CD8-positive, alpha-beta T cell (primary cell): ENCODE measurements at regions of chr17 and their contacts with region 1.

Region 1: GRCh38 chr17:35254107-35254802 is 11.4 kb downstream of the SLFN5 start:
- DNase-seq: peak in 1 of 9 experiments; percentile 28
- ATAC-seq: no peak
- H3K4me3 ChIP-seq: no peak overlapping the region
- H3K4me3 Mint-ChIP-seq: no peak overlapping the region
- H3K27ac ChIP-seq: no peak overlapping the region
- H3K27ac Mint-ChIP-seq: peak overlapping the region; percentile 91
- H3K4me1 ChIP-seq: peaks cover 66% of the 10 kb centered on the region
- H3K4me1 Mint-ChIP-seq: peaks cover 90% of the 10 kb centered on the region
- H3K27me3 ChIP-seq: no peaks in the 10 kb centered on the region
- H3K27me3 Mint-ChIP-seq: no peaks in the 10 kb centered on the region
- CTCF ChIP-seq: no peak

Region 2: GRCh38 chr17:35265566-35266141 is 11.4 kb after region 1 on chr17:
- CTCF ChIA-PET with region 1: interaction called, 11 read pairs
- POLR2A ChIA-PET with region 1: interaction called, 8 read pairs
- intact Hi-C with region 1: no loop called
- DNase-seq: no peak
- ATAC-seq: no peak
- H3K4me3 ChIP-seq: no peak overlapping the region
- H3K4me3 Mint-ChIP-seq: peak overlapping the region; percentile 13
- H3K27ac ChIP-seq: peak overlapping the region in 1 of 2 experiments; percentile 22
- H3K27ac Mint-ChIP-seq: peak overlapping the region; percentile 91
- H3K4me1 ChIP-seq: peaks cover 74% of the 10 kb centered on the region
- H3K4me1 Mint-ChIP-seq: peaks cover 74% of the 10 kb centered on the region
- H3K27me3 ChIP-seq: no peaks in the 10 kb centered on the region
- H3K27me3 Mint-ChIP-seq: no peaks in the 10 kb centered on the region
- CTCF ChIP-seq: no peak

Region 3: GRCh38 chr17:35273684-35274083 is 19.4 kb after region 1 on chr17:
- CTCF ChIA-PET with region 1: interaction called, 4 read pairs
- POLR2A ChIA-PET with region 1: interaction called, 11 read pairs
- intact Hi-C with region 1: no loop called
- DNase-seq: no peak
- ATAC-seq: no peak
- H3K4me3 ChIP-seq: no peak overlapping the region
- H3K4me3 Mint-ChIP-seq: no peak overlapping the region
- H3K27ac ChIP-seq: no peak overlapping the region
- H3K27ac Mint-ChIP-seq: peak overlapping the region; percentile 89
- H3K4me1 ChIP-seq: peaks cover 21% of the 10 kb centered on the region
- H3K4me1 Mint-ChIP-seq: peaks cover 70% of the 10 kb centered on the region
- H3K27me3 ChIP-seq: no peaks in the 10 kb centered on the region
- H3K27me3 Mint-ChIP-seq: no peaks in the 10 kb centered on the region
- CTCF ChIP-seq: no peak

Region 4: DNA sequence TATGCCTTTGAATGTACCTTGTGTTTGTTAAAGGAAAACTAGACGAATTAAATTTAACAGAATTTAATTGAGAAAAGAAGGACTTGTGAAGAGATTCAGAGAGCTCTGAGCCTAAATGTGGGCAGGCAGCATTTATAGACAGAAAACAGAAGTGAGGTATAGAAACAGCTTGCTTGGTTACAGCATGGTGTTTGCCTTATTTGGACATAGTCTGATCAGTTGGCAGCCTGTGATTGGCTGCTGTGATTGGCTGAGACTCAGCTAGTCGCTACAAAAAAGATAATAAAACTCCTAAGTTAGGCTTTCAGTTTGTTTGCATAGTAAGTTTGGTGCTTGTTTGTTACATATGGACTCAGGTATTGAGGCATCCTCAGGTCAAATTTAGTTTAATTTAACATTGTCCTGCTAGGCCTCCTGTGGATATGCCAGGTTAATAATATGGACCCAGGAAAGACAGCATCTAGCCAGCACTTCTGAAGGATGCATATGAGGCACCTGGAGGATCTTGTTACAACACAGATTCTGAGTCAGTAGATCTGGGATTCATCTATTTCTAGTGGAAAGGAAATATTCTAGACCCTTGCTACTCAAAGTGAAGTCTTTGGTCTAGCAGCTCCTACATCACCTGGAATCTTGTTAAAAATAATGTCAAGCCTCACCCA is 32.0 kb after region 1 on chr17:
- CTCF ChIA-PET with region 1: no interaction called
- POLR2A ChIA-PET with region 1: interaction called, 4 read pairs
- intact Hi-C with region 1: loop called in 1 of 2 experiments (anchors 5 kb)
- DNase-seq: peak in 3 of 9 experiments; percentile 50 to 67 (median 55)
- ATAC-seq: peak; percentile 97
- H3K4me3 ChIP-seq: peak overlapping the region in 1 of 2 experiments; percentile 6
- H3K4me3 Mint-ChIP-seq: peak overlapping the region; percentile 42
- H3K27ac ChIP-seq: peak overlapping the region; percentile 16 to 45
- H3K27ac Mint-ChIP-seq: peak overlapping the region; percentile 89
- H3K4me1 ChIP-seq: peaks cover 25% of the 10 kb centered on the region
- H3K4me1 Mint-ChIP-seq: peaks cover 47% of the 10 kb centered on the region
- H3K27me3 ChIP-seq: no peaks in the 10 kb centered on the region
- H3K27me3 Mint-ChIP-seq: no peaks in the 10 kb centered on the region
- CTCF ChIP-seq: no peak

Region 5: GRCh38 chr17:35297666-35298065 is 43.4 kb after region 1 on chr17:
- CTCF ChIA-PET with region 1: no interaction called
- POLR2A ChIA-PET with region 1: no interaction called
- intact Hi-C with region 1: no loop called
- DNase-seq: no peak
- ATAC-seq: no peak
- H3K4me3 ChIP-seq: no peak overlapping the region
- H3K4me3 Mint-ChIP-seq: no peak overlapping the region
- H3K27ac ChIP-seq: no peak overlapping the region
- H3K27ac Mint-ChIP-seq: no peak overlapping the region
- H3K4me1 ChIP-seq: no peaks in the 10 kb centered on the region
- H3K4me1 Mint-ChIP-seq: peaks cover 11% of the 10 kb centered on the region
- H3K27me3 ChIP-seq: no peaks in the 10 kb centered on the region
- H3K27me3 Mint-ChIP-seq: no peaks in the 10 kb centered on the region
- CTCF ChIP-seq: no peak

Region 6: GRCh38 chr17:35361027-35361426 is 106.8 kb after region 1 on chr17:
- CTCF ChIA-PET with region 1: no interaction called
- POLR2A ChIA-PET with region 1: no interaction called
- intact Hi-C with region 1: loop called in 1 of 2 experiments (anchors 5 kb)
- DNase-seq: no peak
- ATAC-seq: no peak
- H3K4me3 ChIP-seq: no peak overlapping the region
- H3K4me3 Mint-ChIP-seq: no peak overlapping the region
- H3K27ac ChIP-seq: no peak overlapping the region
- H3K27ac Mint-ChIP-seq: no peak overlapping the region
- H3K4me1 ChIP-seq: no peaks in the 10 kb centered on the region
- H3K4me1 Mint-ChIP-seq: peaks cover 20% of the 10 kb centered on the region
- H3K27me3 ChIP-seq: no peaks in the 10 kb centered on the region
- H3K27me3 Mint-ChIP-seq: no peaks in the 10 kb centered on the region
- CTCF ChIP-seq: no peak